ENCODE measurements at regions of chr22 and their contacts with region 1.

Region 1: DNA sequence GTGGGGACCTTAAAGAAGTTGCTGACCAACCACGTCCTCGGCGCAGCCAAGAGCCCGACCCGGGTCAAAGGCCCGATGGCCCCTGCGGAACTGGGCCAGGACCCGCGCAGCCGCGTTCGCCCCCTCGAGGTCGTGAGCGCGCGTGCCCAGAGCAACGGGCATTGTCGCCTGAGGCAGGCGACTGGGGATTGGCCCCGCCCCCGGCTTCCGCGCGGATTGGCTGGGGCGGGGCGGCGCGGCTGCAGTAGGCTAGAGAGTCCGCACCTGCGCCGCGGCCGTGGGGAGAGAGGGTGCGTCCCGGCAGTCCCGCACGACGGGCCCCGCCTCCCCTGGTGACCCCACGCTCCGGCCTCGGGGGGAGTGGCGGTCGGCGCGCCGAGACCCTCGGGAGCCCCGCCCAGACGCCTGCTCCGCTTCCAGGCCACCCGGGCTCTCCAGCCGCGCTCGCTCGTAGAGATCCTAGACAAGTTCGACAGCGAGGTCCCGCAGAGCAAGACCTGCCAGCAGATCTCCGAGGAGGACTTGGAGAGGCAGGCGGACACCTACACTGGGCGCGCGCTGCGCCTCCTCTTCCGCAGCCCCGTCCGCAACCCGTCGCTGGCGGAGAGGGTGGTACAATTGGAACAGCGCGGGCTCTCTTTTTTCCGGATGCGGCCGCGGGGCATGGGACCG is 8.3 kb upstream of the PPIL2 start:
- DNase-seq: peak; percentile 61 to 90 (median 67)
- ATAC-seq: peak; percentile 96
- H3K4me3 ChIP-seq: peak overlapping the region; percentile 56
- H3K4me3 Mint-ChIP-seq: peak overlapping the region; percentile 75 to 94 (median 86)
- H3K27ac ChIP-seq: peak overlapping the region; percentile 62
- H3K27ac Mint-ChIP-seq: peak overlapping the region in 5 of 9 donors; percentile 38 to 91 (median 68)
- H3K4me1 ChIP-seq: peaks cover 0 to 14% of the 10 kb centered on the region in 2 donors
- H3K4me1 Mint-ChIP-seq: peaks cover 11 to 26% (median 13%) of the 10 kb centered on the region in 7 donors
- H3K27me3 ChIP-seq: no peaks in the 10 kb centered on the region
- H3K27me3 Mint-ChIP-seq: no peaks in the 10 kb centered on the region

Region 2: GRCh38 chr22:21816787-21817496 is 159.4 kb after region 1 on chr22:
- CTCF ChIA-PET with region 1: no interaction called
- POLR2A ChIA-PET with region 1: no interaction called
- intact Hi-C with region 1: loop called in 1 of 2 experiments (anchors 5 kb)
- DNase-seq: peak in 8 of 9 donors; percentile 16 to 83 (median 74)
- ATAC-seq: peak; percentile 95
- H3K4me3 ChIP-seq: peak overlapping the region; percentile 0
- H3K4me3 Mint-ChIP-seq: peak overlapping the region; percentile 73 to 86 (median 76)
- H3K27ac ChIP-seq: peak overlapping the region; percentile 68
- H3K27ac Mint-ChIP-seq: peak overlapping the region; percentile 92 to 98 (median 97)
- H3K4me1 ChIP-seq: peaks cover 39 to 40% of the 10 kb centered on the region in 2 donors
- H3K4me1 Mint-ChIP-seq: peaks cover 44 to 82% (median 65%) of the 10 kb centered on the region in 7 donors
- H3K27me3 ChIP-seq: no peaks in the 10 kb centered on the region
- H3K27me3 Mint-ChIP-seq: no peaks in the 10 kb centered on the region

Measured in naive thymus-derived CD4-positive, alpha-beta T cell (primary cell).